ENCODE measurements at regions of chr12 and their contacts with region 1.

Region 1: DNA sequence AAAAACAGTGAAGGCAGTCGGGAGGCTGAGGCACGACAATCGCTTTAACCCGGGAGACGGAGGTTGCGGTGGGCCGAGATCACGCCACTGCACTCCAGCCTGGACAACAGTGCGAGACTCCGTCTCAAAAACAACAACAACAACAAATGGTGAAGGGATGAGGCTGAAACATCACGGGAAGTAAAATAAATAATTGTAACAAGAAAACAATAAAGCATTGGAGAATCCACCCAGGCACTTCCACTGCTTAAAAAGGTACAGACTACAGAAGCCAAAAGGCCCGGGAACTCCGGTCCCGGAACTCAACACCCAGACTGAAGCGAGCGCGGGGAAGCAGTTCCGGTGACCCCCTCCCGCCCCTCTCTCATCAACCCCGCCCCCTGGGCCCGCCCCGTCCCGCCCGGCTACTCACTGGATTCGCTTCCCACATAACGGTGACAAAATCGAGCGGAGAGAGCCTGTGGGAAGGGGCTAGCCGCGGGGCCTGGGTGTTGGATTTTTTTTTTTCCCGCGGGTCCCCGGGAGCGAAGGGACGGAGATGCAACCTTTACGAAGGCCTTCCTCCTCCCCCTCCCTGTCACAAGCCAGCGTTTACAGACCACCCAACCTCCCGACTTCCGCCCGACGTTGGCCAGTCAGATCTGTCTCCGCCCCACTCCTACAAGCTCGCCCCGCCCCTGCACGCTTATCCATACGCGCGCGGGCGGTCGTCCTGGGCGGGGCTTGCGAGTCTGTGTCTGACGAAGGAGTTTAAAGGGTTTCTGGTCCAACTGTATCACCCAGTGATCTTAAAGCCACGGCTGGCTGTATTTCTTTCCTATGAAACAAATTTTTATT is at the start of gene PARP11:
- DNase-seq: peak; percentile 100
- H3K4me3 ChIP-seq: peak within 1 kb of the TSS; percentile 93
- H3K27ac ChIP-seq: peak within 1 kb of the TSS; percentile 86
- H3K4me1 ChIP-seq: peaks cover 9% of the 10 kb centered on the region
- H3K27me3 ChIP-seq: no peaks in the 10 kb centered on the region
- total RNA-seq, gene PARP11: 1.0 and 2.1 TPM in 2 replicates

Region 2: GRCh38 chr12:4030929-4031702 is 158.1 kb after region 1 on chr12:
- in situ Hi-C with region 1: loop called (anchors 10 kb)
- DNase-seq: peak; percentile 99
- H3K4me3 ChIP-seq: peak overlapping the region; percentile 61
- H3K27ac ChIP-seq: peak overlapping the region; percentile 63
- H3K4me1 ChIP-seq: peaks cover 9% of the 10 kb centered on the region; the same call in 1 of the 2 replicates
- H3K27me3 ChIP-seq: peaks cover 15% of the 10 kb centered on the region; the same call in 1 of the 2 replicates

Region 3: GRCh38 chr12:4710113-4710512 is 837.1 kb after region 1 on chr12:
- in situ Hi-C with region 1: no loop called
- DNase-seq: no peak
- H3K4me3 ChIP-seq: no peak overlapping the region
- H3K27ac ChIP-seq: no peak overlapping the region
- H3K4me1 ChIP-seq: no peaks in the 10 kb centered on the region
- H3K27me3 ChIP-seq: no peaks in the 10 kb centered on the region; the same call in 1 of the 2 replicates